GM13976 (cell line): ENCODE measurements at regions of chr7 and their contacts with region 1.

Region 1: GRCh38 chr7:117385340-117386109 is 41.8 kb downstream of the ASZ1 start:
- DNase-seq: peak; percentile 13
- CTCF ChIP-seq: peak; percentile 16

Region 2: DNA sequence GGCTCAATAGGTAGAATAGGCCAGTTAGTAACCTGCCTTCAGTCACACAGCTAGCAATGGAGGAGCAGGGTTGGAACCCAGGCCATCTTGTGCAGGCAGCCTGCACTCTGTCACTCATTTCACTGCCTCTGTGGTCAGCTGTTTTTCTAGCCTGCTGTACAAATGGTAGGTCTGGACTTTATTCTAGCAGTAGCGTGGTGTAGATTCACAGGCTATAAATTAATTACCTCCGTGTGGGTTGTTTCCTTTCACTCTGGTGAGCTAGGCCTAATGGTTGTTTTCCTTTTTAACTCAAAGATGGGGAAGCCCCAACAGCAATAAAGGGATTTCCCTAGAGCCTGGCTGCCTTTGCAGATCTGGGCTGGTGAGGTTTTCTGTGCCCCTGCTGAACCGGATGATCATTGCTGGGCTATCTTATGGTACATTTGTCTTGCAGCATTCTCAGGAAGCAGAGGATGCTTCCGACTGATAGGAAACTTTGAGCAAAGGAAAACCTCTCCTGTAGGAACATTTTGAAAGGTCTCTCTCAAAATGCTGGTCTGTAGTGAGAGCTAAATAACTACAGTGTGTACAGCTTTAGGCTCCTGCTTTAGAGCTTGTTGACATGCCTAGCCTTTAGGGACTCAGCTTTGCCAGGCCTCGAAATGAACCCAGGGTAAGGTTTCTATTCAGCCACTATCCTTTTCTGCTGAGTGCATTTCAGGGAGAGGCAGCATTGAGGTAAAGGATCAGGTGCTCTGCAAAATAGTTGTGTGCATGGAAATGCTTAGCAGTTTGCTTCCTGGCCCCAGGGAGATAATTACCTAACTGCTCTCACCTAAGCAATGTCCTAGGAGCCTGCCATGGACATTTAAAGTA is 274.8 kb before region 1 on chr7:
- in situ Hi-C with region 1: no loop called
- DNase-seq: peak; percentile 62
- CTCF ChIP-seq: no peak

Region 3: DNA sequence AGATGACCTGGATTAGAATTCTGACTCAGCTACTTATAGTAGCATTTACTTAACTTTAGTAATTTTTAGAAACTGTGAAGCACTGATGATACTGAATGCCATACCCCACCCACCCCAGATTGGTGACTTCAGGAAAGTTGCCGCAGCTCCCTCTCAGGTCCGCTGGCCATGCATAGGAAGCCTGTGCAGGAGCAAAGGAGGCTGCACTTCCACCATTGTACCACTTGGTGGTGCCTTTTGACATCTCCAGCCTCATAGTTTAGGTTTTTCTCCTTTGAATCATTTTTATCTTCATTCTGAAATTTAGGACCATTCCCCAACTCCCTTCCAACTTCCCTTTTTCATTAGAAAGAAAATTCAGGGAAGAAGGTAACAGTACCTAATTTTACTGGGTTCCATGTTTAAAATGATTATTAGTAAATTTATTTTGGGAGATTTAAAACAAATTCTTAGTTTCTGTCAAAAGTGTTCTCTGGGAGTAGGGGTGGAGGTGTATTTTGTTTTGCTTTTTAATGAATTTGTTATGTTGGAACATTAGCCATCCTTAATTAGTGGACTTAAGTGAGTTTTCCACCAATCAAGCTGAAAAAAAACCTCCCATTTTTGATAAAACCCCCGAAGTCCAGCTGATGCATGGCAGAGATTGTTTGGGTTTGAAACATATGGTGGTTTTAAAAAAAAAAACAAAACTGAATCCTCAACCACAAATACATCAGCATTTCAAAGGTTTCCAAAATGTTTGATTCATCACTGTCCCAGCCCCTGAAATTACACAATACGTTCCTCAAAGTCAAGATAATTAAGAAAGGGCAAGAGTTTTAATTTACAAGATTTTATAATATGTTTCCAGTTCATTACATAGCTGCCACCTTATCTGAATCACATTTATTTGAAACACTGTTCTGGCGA is 172.3 kb before region 1 on chr7:
- in situ Hi-C with region 1: loop called (anchors 10 kb)
- DNase-seq: peak; percentile 55
- CTCF ChIP-seq: peak; percentile 80